Breast epithelium (tissue), 4 donors: ENCODE measurements at regions of chr12 and their contacts with region 1.

Region 1: DNA sequence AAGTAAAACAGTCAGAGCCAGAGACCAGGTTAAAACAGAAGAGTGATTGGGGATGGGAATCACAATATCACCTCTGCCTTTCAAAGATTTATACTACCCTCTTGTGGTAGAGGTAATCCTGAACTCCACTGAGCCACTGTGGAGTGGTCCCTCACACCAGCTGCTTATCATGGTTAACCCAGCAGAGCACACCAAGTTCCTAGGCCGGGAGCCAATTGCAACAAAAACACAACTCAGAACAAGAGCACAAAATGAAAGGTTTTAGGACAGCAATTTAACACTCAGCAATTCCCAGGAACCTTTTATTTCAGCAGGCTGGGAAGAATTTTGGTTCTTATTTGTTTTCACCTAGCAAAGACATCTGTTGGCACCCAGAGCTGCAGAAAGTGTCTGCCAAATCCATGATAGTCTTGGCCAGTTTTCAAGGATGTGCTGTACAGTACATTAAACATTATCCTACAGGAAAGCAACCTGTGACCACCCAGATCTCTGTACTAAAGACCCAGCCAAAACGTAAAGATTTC is 220.5 kb upstream of the ATXN7L3B start:
- DNase-seq: no peak
- H3K4me3 ChIP-seq: no peak overlapping the region
- H3K27ac ChIP-seq: no peak overlapping the region
- H3K4me1 ChIP-seq: no peaks in the 10 kb centered on the region
- H3K27me3 ChIP-seq: no peaks in the 10 kb centered on the region
- CTCF ChIP-seq: peak in 2 of 3 donors; percentile 14 to 41
- POLR2A ChIP-seq: no peak

Region 2: DNA sequence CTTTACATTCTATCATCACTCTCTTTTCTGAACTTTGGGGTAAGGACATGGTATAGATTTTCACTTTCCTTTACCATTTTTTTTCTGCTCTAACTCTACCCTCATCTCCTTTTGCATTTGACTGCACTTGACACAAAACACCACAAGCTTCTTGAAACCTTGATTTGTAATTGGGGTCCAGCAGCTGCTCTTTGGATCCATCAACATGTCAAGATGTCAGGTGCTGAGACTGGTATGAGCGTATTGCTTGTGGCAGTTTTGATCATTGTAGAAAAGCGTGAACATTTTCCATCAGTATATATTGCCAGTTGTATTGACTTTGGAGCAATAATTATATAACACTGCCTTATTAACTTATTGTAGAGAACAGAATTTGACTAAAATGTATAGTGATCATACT is 1206.3 kb before region 1 on chr12:
- intact Hi-C with region 1: loop called (anchors 5 kb)
- DNase-seq: no peak
- H3K4me3 ChIP-seq: no peak overlapping the region
- H3K27ac ChIP-seq: no peak overlapping the region
- H3K4me1 ChIP-seq: no peaks in the 10 kb centered on the region
- H3K27me3 ChIP-seq: no peaks in the 10 kb centered on the region
- CTCF ChIP-seq: no peak
- POLR2A ChIP-seq: no peak

Region 3: GRCh38 chr12:76057326-76057725 is 1740.2 kb after region 1 on chr12:
- intact Hi-C with region 1: no loop called
- DNase-seq: no peak
- H3K4me3 ChIP-seq: no peak overlapping the region
- H3K27ac ChIP-seq: no peak overlapping the region
- H3K4me1 ChIP-seq: no peaks in the 10 kb centered on the region
- H3K27me3 ChIP-seq: no peaks in the 10 kb centered on the region
- CTCF ChIP-seq: no peak
- POLR2A ChIP-seq: no peak